Activated naive CD4-positive, alpha-beta T cell treated with anti-CD3 and anti-CD28 coated beads for 36 hours (primary cell): ENCODE measurements at regions of chr11 and their contacts with region 1.

Region 1: GRCh38 chr11:46700241-46701077 is at the starts of genes ARHGAP1 and ZNF408:
- DNase-seq: peak; percentile 100
- H3K4me3 Mint-ChIP-seq: peak within 1 kb of the TSS; percentile 97
- H3K27ac Mint-ChIP-seq: peak within 1 kb of the TSS; percentile 97
- H3K4me1 Mint-ChIP-seq: peaks cover 45% of the 10 kb centered on the region
- H3K27me3 Mint-ChIP-seq: no peaks in the 10 kb centered on the region
- total RNA-seq, gene ARHGAP1: 31.2 to 32.6 TPM
- total RNA-seq, gene ZNF408: 7.3 to 7.6 TPM

Region 2: GRCh38 chr11:46346886-46347636 is 353.4 kb before region 1 on chr11 and contains the start of gene DGKZ:
- CTCF ChIA-PET with region 1: no interaction called
- intact Hi-C with region 1: loop called (anchors 2 kb)
- DNase-seq: peak; percentile 86
- H3K4me3 Mint-ChIP-seq: peak within 1 kb of the TSS; percentile 84
- H3K27ac Mint-ChIP-seq: peak within 1 kb of the TSS; percentile 92
- H3K4me1 Mint-ChIP-seq: peaks cover 80% of the 10 kb centered on the region
- H3K27me3 Mint-ChIP-seq: no peaks in the 10 kb centered on the region
- total RNA-seq, gene DGKZ: 82.9 to 89.2 TPM

Region 3: DNA sequence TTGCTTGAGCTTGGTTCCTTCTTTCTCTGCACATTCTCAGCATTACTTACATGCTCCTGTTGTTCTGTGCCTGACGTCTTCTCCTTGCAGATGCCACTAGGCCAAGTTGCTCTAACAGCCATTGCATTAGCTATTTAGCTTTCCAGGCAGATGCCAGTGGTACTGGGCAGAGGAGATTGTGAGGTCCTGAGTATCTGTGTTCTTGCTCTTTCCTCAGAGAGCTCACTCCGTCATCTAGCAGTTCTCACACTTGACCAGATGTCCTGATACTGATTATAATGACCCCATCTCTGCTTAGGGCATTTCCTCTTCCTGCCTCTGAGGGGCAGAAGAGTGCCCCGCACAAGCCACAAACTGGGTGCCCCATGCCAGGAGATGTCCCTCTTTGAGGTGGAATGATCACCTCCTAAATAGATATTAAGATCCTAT is 30.7 kb before region 1 on chr11:
- CTCF ChIA-PET with region 1: interaction called, 7 read pairs
- intact Hi-C with region 1: loop called (anchors 1 kb)
- DNase-seq: no peak
- H3K4me3 Mint-ChIP-seq: no peak overlapping the region
- H3K27ac Mint-ChIP-seq: peak overlapping the region; percentile 62
- H3K4me1 Mint-ChIP-seq: peaks cover 51% of the 10 kb centered on the region
- H3K27me3 Mint-ChIP-seq: no peaks in the 10 kb centered on the region

Region 4: DNA sequence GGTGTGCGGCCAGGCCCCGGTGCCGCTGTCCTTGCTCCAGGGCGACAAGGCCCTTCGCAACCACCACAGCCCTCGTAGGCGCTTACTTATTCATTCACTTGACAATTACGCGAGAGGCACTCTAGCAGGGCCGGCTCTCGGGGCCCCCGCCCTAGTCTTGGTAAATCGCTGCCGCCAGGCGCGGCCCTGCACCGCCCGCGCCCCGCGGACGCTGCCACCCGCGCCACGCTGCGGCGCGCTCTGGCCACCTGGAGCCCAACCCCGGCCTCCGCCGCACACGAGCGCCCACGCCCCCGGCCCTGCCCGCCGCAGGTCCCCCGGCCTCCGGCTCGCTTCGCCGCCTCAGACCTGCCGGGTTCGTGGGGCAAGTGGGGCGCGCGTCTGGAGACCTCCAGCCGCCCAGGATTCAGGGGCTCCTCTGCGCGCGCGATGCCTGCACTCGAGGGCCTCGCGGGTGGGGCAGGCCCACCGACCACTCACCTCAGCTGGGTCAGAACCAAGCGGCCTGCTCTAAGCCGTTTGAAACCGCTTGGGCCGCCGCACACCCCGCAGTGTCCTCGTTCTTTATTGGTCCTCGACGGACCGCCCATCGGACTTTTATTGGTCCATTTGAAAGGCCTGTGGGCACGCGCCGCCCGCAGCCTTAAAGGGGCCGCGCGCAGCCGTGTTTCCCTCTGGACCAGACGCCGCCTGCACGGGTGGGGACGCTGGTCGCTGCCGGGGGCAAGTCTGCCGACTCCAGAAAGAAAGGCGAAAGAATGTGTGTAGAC is 145.5 kb after region 1 on chr11 and contains the start of gene CKAP5:
- CTCF ChIA-PET with region 1: no interaction called
- intact Hi-C with region 1: loop called (anchors 1 kb)
- DNase-seq: peak; percentile 91
- H3K4me3 Mint-ChIP-seq: peak within 1 kb of the TSS; percentile 95
- H3K27ac Mint-ChIP-seq: peak within 1 kb of the TSS; percentile 91
- H3K4me1 Mint-ChIP-seq: peaks cover 33% of the 10 kb centered on the region
- H3K27me3 Mint-ChIP-seq: no peaks in the 10 kb centered on the region
- total RNA-seq, gene CKAP5: 205 to 216 TPM

Region 5: DNA sequence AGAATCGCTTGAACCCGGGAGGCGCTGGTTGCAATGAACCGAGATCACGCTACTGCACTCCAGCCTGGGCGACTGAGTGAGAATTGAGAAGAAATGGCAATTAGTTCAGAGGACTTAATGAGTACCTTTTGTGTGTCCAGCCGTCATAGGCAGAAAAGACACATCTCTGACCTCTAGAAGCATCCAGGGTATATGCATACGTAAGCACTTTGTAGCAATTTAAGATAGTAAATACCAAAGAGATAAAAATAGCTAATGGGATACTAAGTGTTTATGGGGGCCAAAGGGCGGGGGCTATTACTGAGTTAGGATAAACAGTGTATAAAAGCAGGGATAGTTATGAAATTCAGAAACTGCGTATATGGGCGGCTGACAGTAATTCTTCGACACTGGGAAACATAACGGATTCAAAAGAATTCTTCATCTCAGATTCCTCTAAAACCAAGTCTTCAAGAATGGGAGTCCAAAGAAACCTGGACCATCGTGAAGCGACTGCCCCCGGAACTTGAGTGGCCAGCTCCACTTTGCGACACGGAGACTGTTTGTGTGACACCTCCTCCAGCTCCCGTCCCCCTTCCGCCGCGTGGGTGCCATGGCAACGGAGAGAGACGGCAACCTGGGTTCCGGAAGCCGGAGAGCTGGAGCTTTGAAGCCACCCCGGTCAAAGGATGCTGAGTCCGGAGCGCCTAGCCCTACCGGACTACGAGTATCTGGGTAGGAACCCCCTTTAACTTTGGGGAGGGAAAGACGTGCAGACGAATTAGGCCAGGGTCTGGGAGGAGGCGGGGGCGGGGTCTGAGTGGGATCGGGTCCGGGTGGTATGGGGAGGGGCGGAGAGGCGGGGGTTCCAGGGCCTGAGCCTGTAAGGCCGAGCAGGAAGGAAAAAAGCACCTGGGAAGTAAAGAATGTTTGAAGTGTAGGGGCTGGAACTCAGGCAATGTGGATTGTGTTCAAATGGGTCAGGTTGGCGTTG is 236.0 kb after region 1 on chr11 and contains the start of gene CSTPP1:
- CTCF ChIA-PET with region 1: no interaction called
- intact Hi-C with region 1: loop called (anchors 1 kb)
- DNase-seq: peak; percentile 97
- H3K4me3 Mint-ChIP-seq: peak within 1 kb of the TSS; percentile 98
- H3K27ac Mint-ChIP-seq: peak within 1 kb of the TSS; percentile 88
- H3K4me1 Mint-ChIP-seq: peaks cover 18% of the 10 kb centered on the region
- H3K27me3 Mint-ChIP-seq: no peaks in the 10 kb centered on the region
- total RNA-seq, gene CSTPP1: 14.0 TPM